ENCODE measurements at regions of chr5 and their contacts with region 1.

Region 1: GRCh38 chr5:58886315-58887207 is 303.7 kb downstream of the RAB3C start:
- DNase-seq: no peak
- H3K4me3 ChIP-seq: no peak overlapping the region
- H3K27ac ChIP-seq: no peak overlapping the region
- H3K4me1 ChIP-seq: peaks cover 0 to 7% (median 0%) of the 10 kb centered on the region in 3 donors
- H3K27me3 ChIP-seq: no peaks in the 10 kb centered on the region
- CTCF ChIP-seq: peak; percentile 75 to 86 (median 81)
- POLR2A ChIP-seq: no peak

Region 2: DNA sequence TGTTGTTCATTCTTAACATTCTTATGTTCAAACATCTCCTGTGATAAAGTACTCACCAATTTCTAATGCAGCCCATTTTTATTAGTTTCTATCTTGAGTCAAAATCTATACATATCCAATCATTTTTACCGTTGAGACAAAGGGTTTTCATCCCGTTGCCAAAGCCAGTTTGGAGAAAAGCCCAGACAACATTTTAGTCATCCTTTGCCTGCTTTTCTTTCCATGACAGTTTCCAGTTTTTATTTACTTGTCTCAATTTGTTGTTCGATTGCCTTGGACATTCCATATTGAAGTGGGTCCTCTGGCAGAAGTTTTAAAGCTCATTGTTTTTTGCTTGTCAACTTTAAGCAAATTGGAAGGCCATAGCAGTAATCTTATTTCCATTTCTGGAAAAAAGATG is 179.8 kb before region 1 on chr5:
- intact Hi-C with region 1: no loop called
- DNase-seq: no peak
- H3K4me3 ChIP-seq: no peak overlapping the region
- H3K27ac ChIP-seq: no peak overlapping the region
- H3K4me1 ChIP-seq: no peaks in the 10 kb centered on the region
- H3K27me3 ChIP-seq: no peaks in the 10 kb centered on the region
- CTCF ChIP-seq: no peak
- POLR2A ChIP-seq: no peak

Region 3: DNA sequence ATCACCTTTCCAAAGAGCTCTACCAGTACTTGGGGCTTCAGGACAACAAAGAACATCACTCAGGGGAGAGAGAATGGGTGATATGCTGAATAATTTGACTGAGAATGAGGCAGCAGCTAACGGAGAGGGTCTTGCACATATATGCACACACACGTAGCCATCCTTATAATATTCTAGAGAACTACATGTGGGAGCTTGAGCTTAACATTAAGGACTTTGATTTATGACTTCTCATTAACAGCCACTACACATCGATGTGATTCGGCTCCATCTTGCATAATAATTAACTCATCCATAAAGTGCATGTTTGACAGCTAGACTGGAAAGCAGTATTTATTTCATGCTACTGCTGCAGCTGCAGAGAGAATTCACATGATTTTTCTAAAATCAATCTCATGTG is 140.2 kb before region 1 on chr5:
- intact Hi-C with region 1: no loop called
- DNase-seq: no peak
- H3K4me3 ChIP-seq: no peak overlapping the region
- H3K27ac ChIP-seq: no peak overlapping the region
- H3K4me1 ChIP-seq: no peaks in the 10 kb centered on the region
- H3K27me3 ChIP-seq: no peaks in the 10 kb centered on the region
- CTCF ChIP-seq: no peak
- POLR2A ChIP-seq: no peak

Region 4: DNA sequence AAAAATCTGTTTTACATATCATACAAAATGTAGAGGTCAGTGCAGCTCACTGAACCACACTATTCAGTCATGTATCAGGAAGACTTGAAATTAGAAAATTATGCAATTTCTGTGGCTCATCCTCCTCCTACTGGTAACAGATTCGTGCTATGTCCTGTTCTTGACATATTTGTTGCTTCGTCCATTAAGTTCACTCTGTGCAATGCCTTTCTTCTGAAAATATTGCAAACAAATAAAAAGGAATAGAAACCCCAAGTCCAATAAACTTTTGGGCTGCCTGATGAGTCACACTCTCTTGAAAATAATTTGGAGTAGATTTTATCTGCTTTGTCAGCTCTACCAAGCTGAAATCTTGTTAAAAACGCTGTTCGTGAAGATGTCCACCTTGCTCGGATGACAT is 87.5 kb after region 1 on chr5:
- intact Hi-C with region 1: no loop called
- DNase-seq: no peak
- H3K4me3 ChIP-seq: no peak overlapping the region
- H3K27ac ChIP-seq: no peak overlapping the region
- H3K4me1 ChIP-seq: no peaks in the 10 kb centered on the region
- H3K27me3 ChIP-seq: no peaks in the 10 kb centered on the region
- CTCF ChIP-seq: no peak
- POLR2A ChIP-seq: no peak

Region 5: DNA sequence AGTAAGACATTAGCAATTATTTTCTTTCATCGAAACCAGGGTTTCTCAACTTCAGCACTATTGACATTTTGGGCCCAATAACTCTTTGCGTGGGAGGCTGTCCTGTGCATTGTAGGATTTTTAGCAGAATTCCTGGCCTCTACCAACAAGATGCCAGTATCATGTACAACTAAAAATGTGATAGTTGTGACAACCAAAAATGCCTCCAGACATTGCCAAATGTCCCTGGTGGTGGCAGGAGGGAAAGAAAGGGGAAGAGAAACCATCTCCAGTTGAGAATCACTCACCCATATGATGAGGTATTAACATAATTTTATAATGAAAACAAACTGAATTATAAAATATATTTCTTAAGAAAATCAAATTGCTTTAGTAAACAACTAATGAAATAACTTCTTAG is 102.4 kb after region 1 on chr5:
- intact Hi-C with region 1: no loop called
- DNase-seq: no peak
- H3K4me3 ChIP-seq: no peak overlapping the region
- H3K27ac ChIP-seq: no peak overlapping the region
- H3K4me1 ChIP-seq: no peaks in the 10 kb centered on the region
- H3K27me3 ChIP-seq: no peaks in the 10 kb centered on the region
- CTCF ChIP-seq: no peak
- POLR2A ChIP-seq: no peak

Region 6: DNA sequence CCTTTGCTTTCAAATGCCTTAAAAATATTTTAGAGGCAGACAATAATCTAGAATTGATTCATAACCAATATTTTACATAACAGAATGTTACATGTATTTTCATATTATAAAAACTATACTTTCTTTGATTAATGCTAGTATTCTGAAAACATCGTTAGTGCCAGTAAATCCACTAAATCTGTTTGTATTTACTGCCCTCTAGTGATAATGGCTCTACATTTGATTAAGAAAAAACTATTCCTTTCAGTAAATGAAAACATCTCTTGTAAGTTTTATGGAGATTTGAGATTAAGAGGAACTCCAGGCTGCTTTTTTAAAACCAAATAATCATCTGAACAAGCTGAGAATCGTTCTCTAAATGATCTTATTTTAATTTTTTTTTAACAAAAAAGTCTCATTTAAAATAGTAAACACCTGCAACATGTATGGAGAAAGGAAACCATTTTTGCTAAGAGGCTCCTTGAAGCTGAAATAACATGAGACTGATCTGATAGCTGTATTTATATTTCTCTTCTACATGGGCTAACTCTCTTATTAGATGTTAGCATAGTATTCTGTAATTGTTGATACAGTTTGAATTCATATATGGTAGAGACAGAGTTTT is 121.0 kb after region 1 on chr5:
- intact Hi-C with region 1: loop called (anchors 5 kb)
- DNase-seq: no peak
- H3K4me3 ChIP-seq: no peak overlapping the region
- H3K27ac ChIP-seq: no peak overlapping the region
- H3K4me1 ChIP-seq: no peaks in the 10 kb centered on the region
- H3K27me3 ChIP-seq: no peaks in the 10 kb centered on the region
- CTCF ChIP-seq: peak in 4 of 6 experiments; percentile 10 to 53 (median 33)
- POLR2A ChIP-seq: no peak

Measured in esophagus squamous epithelium (tissue), 5 donors.